GM12878 (cell line): ENCODE measurements at regions of chr2 and their contacts with region 1.

Region 1: DNA sequence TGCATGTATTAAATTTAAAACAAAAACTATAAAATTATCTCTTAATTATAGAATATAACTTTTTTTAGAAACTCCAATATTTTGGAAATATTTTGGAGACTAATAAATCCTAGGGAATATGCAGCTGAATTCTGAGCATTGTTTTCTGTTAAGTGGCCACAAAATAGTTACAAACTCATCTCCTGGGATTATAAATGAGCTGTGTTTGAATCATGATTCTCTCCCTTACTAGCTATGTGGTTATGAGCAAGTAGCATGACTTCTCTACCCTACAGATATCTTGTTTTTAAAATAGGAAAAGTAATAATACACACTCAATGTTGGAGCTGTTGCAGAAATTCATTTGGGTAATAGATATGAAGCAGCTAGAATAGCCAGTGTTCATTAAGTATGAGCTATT is 137.9 kb upstream of the ITGA4 start:
- DNase-seq: no peak
- ATAC-seq: no peak
- H3K4me3 ChIP-seq: no peak overlapping the region
- H3K27ac ChIP-seq: no peak overlapping the region
- H3K4me1 ChIP-seq: peaks cover 9% of the 10 kb centered on the region; the same call in 1 of the 2 replicates
- H3K27me3 ChIP-seq: no peaks in the 10 kb centered on the region
- CTCF ChIP-seq: no peak
- EP300 ChIP-seq: no peak
- POLR2A ChIP-seq: no peak
- RAD21 ChIP-seq: no peak

Region 2: DNA sequence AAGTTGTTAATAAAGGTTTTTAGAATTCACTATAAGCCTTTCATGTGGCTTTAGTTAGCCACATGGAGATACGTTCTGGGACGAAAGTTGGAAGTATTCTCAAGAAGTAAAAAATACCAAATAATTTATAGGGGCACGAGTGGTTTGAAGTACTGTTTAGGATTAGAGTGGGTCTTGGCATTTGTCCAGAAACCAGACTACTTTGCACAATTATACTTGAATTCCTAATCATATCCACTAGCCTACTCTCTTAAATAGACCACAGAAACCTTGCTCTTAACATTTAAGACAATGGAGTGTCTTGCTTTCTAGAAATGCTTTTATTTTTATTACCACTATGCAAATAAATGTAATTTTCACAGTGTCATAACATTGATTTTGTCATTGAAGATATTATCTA is 294.3 kb before region 1 on chr2:
- CTCF ChIA-PET with region 1: no interaction called
- POLR2A ChIA-PET with region 1: interaction called, 10 read pairs
- RAD21 ChIA-PET with region 1: no interaction called
- SMC1A ChIA-PET with region 1: no interaction called
- in situ Hi-C with region 1: no loop called
- intact Hi-C with region 1: no loop called
- DNase-seq: no peak
- ATAC-seq: no peak
- H3K4me3 ChIP-seq: no peak overlapping the region
- H3K27ac ChIP-seq: no peak overlapping the region
- H3K4me1 ChIP-seq: no peaks in the 10 kb centered on the region
- H3K27me3 ChIP-seq: no peaks in the 10 kb centered on the region
- CTCF ChIP-seq: no peak
- EP300 ChIP-seq: no peak
- POLR2A ChIP-seq: no peak
- RAD21 ChIP-seq: no peak

Region 3: GRCh38 chr2:181334158-181334826 is 15.0 kb after region 1 on chr2:
- CTCF ChIA-PET with region 1: interaction called, 6 read pairs
- POLR2A ChIA-PET with region 1: interaction called, 4 read pairs
- RAD21 ChIA-PET with region 1: interaction called, 5 read pairs
- SMC1A ChIA-PET with region 1: interaction called, 23 read pairs
- in situ Hi-C with region 1: no loop called
- intact Hi-C with region 1: no loop called
- DNase-seq: no peak
- ATAC-seq: peak; percentile 83
- H3K4me3 ChIP-seq: no peak overlapping the region
- H3K27ac ChIP-seq: no peak overlapping the region
- H3K4me1 ChIP-seq: no peaks in the 10 kb centered on the region
- H3K27me3 ChIP-seq: no peaks in the 10 kb centered on the region
- CTCF ChIP-seq: no peak
- EP300 ChIP-seq: no peak
- POLR2A ChIP-seq: no peak
- RAD21 ChIP-seq: no peak

Region 4: DNA sequence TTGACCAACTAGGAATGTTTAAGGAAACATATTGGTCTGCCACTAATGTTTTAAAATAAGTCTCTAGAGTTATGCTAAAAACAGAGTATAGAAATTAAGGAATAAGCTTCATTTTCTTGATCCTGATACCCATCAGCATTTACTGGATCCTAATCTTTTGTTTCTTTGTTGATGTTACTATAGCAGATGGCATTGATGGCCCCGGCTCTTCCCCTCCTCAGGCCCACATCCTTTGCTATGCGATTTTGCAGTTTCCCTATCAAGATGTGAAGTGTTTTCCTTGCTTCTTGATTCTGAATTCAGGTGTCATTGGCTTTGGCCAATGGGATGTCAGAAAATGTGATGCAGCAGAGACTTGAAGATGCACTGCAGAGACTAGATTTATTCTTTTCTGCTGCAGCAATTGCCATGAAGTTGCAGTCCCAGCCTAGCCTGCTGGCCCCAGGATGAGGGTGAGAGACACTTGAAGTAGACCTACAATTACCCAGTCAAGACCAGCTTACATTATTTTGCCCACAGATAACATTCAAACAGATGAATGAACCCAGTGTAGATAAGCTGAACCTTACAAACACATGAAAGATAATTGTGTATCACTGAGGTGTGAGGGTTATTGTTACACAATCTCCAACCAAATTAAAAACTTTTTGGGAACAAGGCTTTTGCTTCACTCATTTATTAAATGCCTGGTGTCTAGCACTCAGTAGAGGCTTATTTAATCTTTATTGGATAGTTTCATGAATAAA is 22.7 kb after region 1 on chr2:
- CTCF ChIA-PET with region 1: interaction called, 5 read pairs
- POLR2A ChIA-PET with region 1: interaction called, 8 read pairs
- RAD21 ChIA-PET with region 1: interaction called, 3 read pairs
- SMC1A ChIA-PET with region 1: interaction called, 37 read pairs
- in situ Hi-C with region 1: no loop called
- intact Hi-C with region 1: no loop called
- DNase-seq: no peak
- ATAC-seq: no peak
- H3K4me3 ChIP-seq: no peak overlapping the region
- H3K27ac ChIP-seq: no peak overlapping the region
- H3K4me1 ChIP-seq: no peaks in the 10 kb centered on the region
- H3K27me3 ChIP-seq: no peaks in the 10 kb centered on the region
- CTCF ChIP-seq: no peak
- EP300 ChIP-seq: no peak
- POLR2A ChIP-seq: no peak
- RAD21 ChIP-seq: no peak